Right ventricle myocardium inferior (tissue), 1 donor: ENCODE measurements at regions of chr3 and their contacts with region 1.

Region 1: GRCh38 chr3:54356261-54357045 is 234.1 kb downstream of the CACNA2D3 start:
- DNase-seq: no peak
- ATAC-seq: peak; percentile 73

Region 2: DNA sequence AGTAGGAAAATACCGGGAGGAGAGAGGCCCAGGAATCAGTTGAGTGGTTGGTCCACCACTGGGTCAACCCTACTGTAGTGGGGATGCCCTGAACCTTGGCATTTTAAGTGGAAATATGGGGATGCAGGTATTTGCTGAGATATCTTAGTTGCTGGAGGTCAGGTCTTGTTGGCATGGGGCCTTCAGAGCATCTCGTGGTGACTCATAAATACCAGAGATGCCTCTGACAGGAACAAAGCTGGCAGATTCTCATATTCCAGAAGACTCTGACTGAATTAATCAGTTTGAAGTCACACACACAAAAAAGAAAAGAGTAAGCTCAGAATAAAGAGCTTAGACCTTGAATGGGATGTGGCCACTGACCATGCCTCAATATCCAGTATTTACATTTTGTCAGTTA is 142.5 kb before region 1 on chr3:
- intact Hi-C with region 1: loop called (anchors 5 kb)
- DNase-seq: no peak
- ATAC-seq: no peak

Region 3: DNA sequence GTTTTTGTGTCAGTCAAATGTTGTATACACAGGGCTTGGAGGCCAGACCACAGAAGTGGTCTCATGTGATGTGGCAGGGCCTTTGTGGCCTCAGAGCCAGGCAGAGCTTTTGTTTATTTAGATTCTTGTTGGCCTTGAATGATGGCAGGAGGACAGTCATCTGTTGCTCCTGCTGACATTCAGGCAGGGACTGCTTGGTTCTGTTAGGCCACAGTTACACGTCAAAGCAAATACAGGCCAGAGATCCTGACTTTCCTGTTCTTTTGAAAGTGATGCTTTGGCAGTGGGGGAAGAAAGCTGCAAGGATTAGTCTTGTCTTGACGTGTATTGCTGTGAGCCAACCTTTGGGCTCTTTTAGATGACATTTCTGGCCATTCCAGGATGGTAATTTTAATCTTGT is 91.0 kb after region 1 on chr3:
- intact Hi-C with region 1: no loop called
- DNase-seq: no peak
- ATAC-seq: no peak